Cardiac septum (tissue), 1 donor: ENCODE measurements at regions of chr12 and their contacts with region 1.

Region 1: GRCh38 chr12:116996093-116996492 is 85.3 kb downstream of the FBXW8 start:
- DNase-seq: no peak

Region 2: GRCh38 chr12:116943419-116944372 is 52.4 kb before region 1 on chr12:
- intact Hi-C with region 1: loop called (anchors 5 kb)
- DNase-seq: no peak

Region 3: GRCh38 chr12:117047810-117048584 is 51.9 kb after region 1 on chr12:
- intact Hi-C with region 1: no loop called
- DNase-seq: no peak